CD8-positive, alpha-beta T cell (primary cell): ENCODE measurements at regions of chr17 and their contacts with region 1.

Region 1: GRCh38 chr17:75877752-75878173 is 618 bp downstream of the TRIM47 start:
- DNase-seq: peak; percentile 44 to 85 (median 72)
- ATAC-seq: peak; percentile 67
- H3K4me3 ChIP-seq: peak overlapping the region; percentile 41 to 60
- H3K4me3 Mint-ChIP-seq: peak overlapping the region; percentile 88
- H3K27ac ChIP-seq: peak overlapping the region in 1 of 2 experiments; percentile 0
- H3K27ac Mint-ChIP-seq: peak overlapping the region; percentile 80
- H3K4me1 ChIP-seq: peaks cover 42% of the 10 kb centered on the region
- H3K4me1 Mint-ChIP-seq: peaks cover 46% of the 10 kb centered on the region
- H3K27me3 ChIP-seq: peaks cover 0 to 8% of the 10 kb centered on the region in 2 experiments
- H3K27me3 Mint-ChIP-seq: no peaks in the 10 kb centered on the region
- CTCF ChIP-seq: peak; percentile 69

Region 2: DNA sequence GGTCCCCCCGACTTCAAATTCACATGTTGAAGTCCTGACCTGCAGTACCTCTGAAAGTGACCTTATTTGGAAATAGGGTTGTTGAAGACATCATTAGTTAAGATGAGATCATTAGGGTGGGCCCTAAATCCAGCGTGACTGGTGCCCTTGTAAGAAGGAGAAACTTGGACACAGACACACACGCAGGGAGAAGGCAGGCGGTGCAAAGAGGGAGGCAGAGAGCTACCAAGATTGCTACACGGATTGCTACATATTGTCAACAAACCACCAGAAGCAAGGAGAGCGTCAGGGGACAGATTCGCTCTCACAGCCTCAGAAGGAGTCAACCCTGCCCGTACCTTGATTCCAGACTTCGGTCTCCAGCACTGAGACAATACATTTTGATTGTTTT is 15.8 kb before region 1 on chr17:
- CTCF ChIA-PET with region 1: interaction called, 51 read pairs
- POLR2A ChIA-PET with region 1: interaction called, 9 read pairs
- intact Hi-C with region 1: no loop called
- DNase-seq: no peak
- ATAC-seq: no peak
- H3K4me3 ChIP-seq: no peak overlapping the region
- H3K4me3 Mint-ChIP-seq: no peak overlapping the region
- H3K27ac ChIP-seq: no peak overlapping the region
- H3K27ac Mint-ChIP-seq: no peak overlapping the region
- H3K4me1 ChIP-seq: peaks cover 16% of the 10 kb centered on the region
- H3K4me1 Mint-ChIP-seq: peaks cover 23% of the 10 kb centered on the region
- H3K27me3 ChIP-seq: no peaks in the 10 kb centered on the region
- H3K27me3 Mint-ChIP-seq: no peaks in the 10 kb centered on the region
- CTCF ChIP-seq: no peak

Region 3: GRCh38 chr17:75940724-75941441 is 63.1 kb after region 1 on chr17 and contains the start of gene FBF1:
- CTCF ChIA-PET with region 1: no interaction called
- POLR2A ChIA-PET with region 1: interaction called, 3 read pairs
- intact Hi-C with region 1: loop called in 1 of 2 experiments (anchors 1 kb)
- DNase-seq: peak; percentile 64 to 92 (median 84)
- ATAC-seq: peak; percentile 99
- H3K4me3 ChIP-seq: peak within 1 kb of the TSS; percentile 61 to 84
- H3K4me3 Mint-ChIP-seq: peak within 1 kb of the TSS; percentile 91
- H3K27ac ChIP-seq: peak within 1 kb of the TSS; percentile 49 to 72
- H3K27ac Mint-ChIP-seq: peak within 1 kb of the TSS; percentile 86
- H3K4me1 ChIP-seq: peaks cover 15% of the 10 kb centered on the region
- H3K4me1 Mint-ChIP-seq: peaks cover 13% of the 10 kb centered on the region
- H3K27me3 ChIP-seq: no peaks in the 10 kb centered on the region
- H3K27me3 Mint-ChIP-seq: no peaks in the 10 kb centered on the region
- CTCF ChIP-seq: no peak
- total RNA-seq, gene FBF1: 18.6 to 21.1 TPM

Region 4: GRCh38 chr17:76022285-76022684 is 144.5 kb after region 1 on chr17:
- CTCF ChIA-PET with region 1: no interaction called
- POLR2A ChIA-PET with region 1: no interaction called
- intact Hi-C with region 1: no loop called
- DNase-seq: no peak
- ATAC-seq: no peak
- H3K4me3 ChIP-seq: no peak overlapping the region
- H3K4me3 Mint-ChIP-seq: no peak overlapping the region
- H3K27ac ChIP-seq: no peak overlapping the region
- H3K27ac Mint-ChIP-seq: no peak overlapping the region
- H3K4me1 ChIP-seq: peaks cover 12% of the 10 kb centered on the region
- H3K4me1 Mint-ChIP-seq: peaks cover 9% of the 10 kb centered on the region
- H3K27me3 ChIP-seq: no peaks in the 10 kb centered on the region
- H3K27me3 Mint-ChIP-seq: no peaks in the 10 kb centered on the region
- CTCF ChIP-seq: no peak